ENCODE measurements at regions of chrX and their contacts with region 1.

Region 1: DNA sequence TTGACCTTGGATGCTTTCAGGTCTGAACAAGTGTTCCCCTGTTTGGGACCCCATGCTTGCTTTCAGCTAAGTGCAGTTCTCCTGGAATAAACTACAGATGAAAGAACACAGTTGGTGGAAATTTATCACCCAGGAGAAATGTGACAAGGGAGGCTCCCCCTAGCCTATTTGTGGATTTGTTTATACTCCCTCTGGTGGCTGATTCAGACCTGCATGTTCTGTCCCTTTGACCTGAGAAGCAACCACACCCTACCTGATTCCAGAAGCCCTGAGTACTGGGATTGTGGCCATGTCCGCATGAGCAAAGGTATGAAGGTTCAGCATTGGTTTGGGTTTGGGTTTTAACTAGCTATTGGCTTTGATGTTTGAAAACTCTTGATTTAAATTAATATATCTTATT is 440.9 kb downstream of the MID1IP1 start:
- DNase-seq: peak in 1 of 2 donors; percentile 5
- ATAC-seq: peak in 1 of 8 donors; percentile 47
- H3K4me3 ChIP-seq: no peak overlapping the region
- H3K27ac ChIP-seq: no peak overlapping the region
- H3K4me1 ChIP-seq: no peaks in the 10 kb centered on the region
- H3K27me3 ChIP-seq: peaks cover 0 to 41% (median 0%) of the 10 kb centered on the region in 7 donors
- CTCF ChIP-seq: peak in 8 of 9 donors; percentile 18 to 55 (median 46)

Region 2: DNA sequence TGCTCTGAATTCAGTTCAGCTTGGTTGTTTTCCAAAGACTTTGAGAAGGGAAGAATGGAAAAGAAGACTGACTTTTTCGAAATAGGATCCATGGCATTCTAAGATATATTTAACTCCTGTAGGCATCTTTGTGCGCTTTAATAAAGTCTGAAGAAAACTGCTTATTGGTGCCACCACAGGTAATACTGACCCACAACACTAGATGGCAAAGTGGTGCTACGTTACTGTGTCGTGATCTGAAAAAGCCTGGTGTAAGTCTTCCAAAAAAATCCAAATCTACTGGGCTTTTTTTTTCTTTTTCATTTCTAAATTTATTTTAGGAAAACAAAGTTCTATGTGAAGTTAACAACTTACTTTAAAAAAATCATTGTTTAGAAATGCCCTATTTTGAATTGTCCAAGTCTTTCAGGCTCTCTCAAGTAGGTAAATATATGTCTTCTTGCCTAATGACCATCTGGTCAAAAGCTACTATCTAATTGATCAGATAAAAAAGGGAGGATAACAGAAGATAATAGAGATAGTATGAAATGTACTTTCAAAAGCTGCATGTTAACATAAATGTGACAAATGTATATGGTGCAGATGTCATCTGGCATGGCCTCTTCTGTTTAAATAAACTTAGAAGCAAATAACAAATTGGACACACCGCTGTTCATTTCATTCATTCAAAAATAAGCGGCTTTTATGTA is 487.9 kb before region 1 on chrX:
- intact Hi-C with region 1: loop called in 3 of 10 experiments (anchors 10 kb)
- DNase-seq: peak in 1 of 2 donors; percentile 4
- ATAC-seq: peak in 3 of 8 donors; percentile 42 to 75 (median 47)
- H3K4me3 ChIP-seq: no peak overlapping the region
- H3K27ac ChIP-seq: no peak overlapping the region
- H3K4me1 ChIP-seq: peaks cover 0 to 4% (median 0%) of the 10 kb centered on the region in 9 donors
- H3K27me3 ChIP-seq: peaks cover 0 to 24% (median 0%) of the 10 kb centered on the region in 7 donors
- CTCF ChIP-seq: peak; percentile 16 to 67 (median 61)

Region 3: GRCh38 chrX:38768079-38768478 is 474.1 kb before region 1 on chrX:
- intact Hi-C with region 1: loop called in 1 of 10 experiments (anchors 10 kb)
- DNase-seq: no peak
- ATAC-seq: peak in 1 of 8 donors; percentile 51
- H3K4me3 ChIP-seq: no peak overlapping the region
- H3K27ac ChIP-seq: no peak overlapping the region
- H3K4me1 ChIP-seq: no peaks in the 10 kb centered on the region
- H3K27me3 ChIP-seq: peaks cover 0 to 32% (median 0%) of the 10 kb centered on the region in 7 donors
- CTCF ChIP-seq: peak in 8 of 9 donors; percentile 15 to 59 (median 44)

Region 4: DNA sequence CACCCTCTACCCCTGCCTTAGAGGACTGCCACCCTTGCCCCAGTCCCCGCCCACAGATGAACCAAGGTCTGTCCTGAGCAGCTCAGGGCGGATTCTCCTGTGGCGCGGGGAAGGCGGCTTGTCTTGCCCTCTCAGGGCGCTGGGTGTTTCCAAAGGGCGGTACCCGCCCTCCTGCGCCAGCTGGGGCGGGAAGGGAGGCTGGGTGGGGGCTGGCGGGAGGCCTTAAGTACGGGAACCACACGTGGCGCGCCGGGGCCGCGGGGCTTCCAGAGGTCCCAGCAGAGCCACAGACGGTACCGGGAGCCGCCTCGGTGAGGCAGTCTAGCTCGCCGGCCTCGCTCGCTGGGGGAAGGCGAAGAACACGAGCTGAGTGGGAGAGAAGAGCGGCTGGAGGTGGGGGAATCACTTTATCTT is 79.9 kb before region 1 on chrX:
- intact Hi-C with region 1: loop called in 1 of 10 experiments (anchors 10 kb)
- DNase-seq: peak in 1 of 2 donors; percentile 26
- ATAC-seq: peak in 6 of 8 donors; percentile 49 to 74 (median 58)
- H3K4me3 ChIP-seq: peak overlapping the region in 5 of 10 donors; percentile 5 to 27 (median 18)
- H3K27ac ChIP-seq: no peak overlapping the region
- H3K4me1 ChIP-seq: peaks cover 0 to 13% (median 0%) of the 10 kb centered on the region in 9 donors
- H3K27me3 ChIP-seq: peaks cover 0 to 62% (median 0%) of the 10 kb centered on the region in 7 donors
- CTCF ChIP-seq: peak in 6 of 9 donors; percentile 14 to 34 (median 26)